ENCODE measurements at regions of chr1 and their contacts with region 1.

Region 1: GRCh38 chr1:237386362-237387143 is 344.6 kb downstream of the RYR2 start:
- DNase-seq: peak; percentile 32
- ATAC-seq: no peak; the same call in 1 of the 2 replicates
- H3K4me3 ChIP-seq: no peak overlapping the region
- H3K27ac ChIP-seq: no peak overlapping the region
- H3K4me1 ChIP-seq: no peaks in the 10 kb centered on the region
- H3K27me3 ChIP-seq: no peaks in the 10 kb centered on the region
- CTCF ChIP-seq: peak; percentile 66
- POLR2A ChIP-seq: no peak
- RAD21 ChIP-seq: peak; percentile 63

Region 2: DNA sequence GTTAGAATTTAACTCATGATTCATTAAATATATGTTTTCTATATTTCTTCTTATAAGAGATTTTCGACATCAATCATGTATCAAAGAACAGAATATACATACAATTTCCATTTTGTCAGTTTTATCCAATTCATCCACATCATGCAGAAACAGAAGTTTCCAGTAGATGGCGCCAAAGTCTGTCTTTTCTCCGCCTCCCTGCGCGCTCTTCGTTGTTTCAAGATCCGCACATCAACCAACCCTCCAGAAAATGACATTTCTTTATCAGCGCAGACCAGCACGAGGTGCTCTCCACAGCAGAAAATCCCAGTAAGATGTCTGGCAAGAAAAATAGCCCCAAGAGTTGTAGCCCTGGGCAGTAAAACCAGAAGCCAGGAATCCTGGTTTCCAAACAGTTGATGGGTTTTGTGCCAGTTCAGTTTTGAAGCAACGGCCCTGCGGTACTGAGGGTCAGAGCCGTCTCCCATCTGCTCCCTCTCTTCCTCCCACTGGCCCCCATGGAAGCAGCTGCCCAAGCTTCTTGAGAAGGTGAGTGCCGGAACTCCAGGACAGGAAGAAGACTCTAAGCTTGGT is 1282.8 kb before region 1 on chr1:
- CTCF ChIA-PET with region 1: no interaction called
- POLR2A ChIA-PET with region 1: no interaction called
- dilution Hi-C with region 1: no loop called
- in situ Hi-C with region 1: loop called (anchors 25 kb)
- intact Hi-C with region 1: loop called (anchors 10 kb)
- DNase-seq: peak; percentile 57
- ATAC-seq: peak; percentile 79
- H3K4me3 ChIP-seq: no peak overlapping the region
- H3K27ac ChIP-seq: no peak overlapping the region
- H3K4me1 ChIP-seq: peaks cover 2% of the 10 kb centered on the region; the same call in 1 of the 2 replicates
- H3K27me3 ChIP-seq: peaks cover 7% of the 10 kb centered on the region
- CTCF ChIP-seq: peak; percentile 88
- POLR2A ChIP-seq: no peak
- RAD21 ChIP-seq: peak; percentile 91

Region 3: GRCh38 chr1:236603991-236604904 is 782.3 kb before region 1 on chr1 and contains the start of gene HEATR1:
- CTCF ChIA-PET with region 1: interaction called, 4 read pairs
- POLR2A ChIA-PET with region 1: no interaction called
- dilution Hi-C with region 1: no loop called
- in situ Hi-C with region 1: loop called (anchors 25 kb)
- intact Hi-C with region 1: loop called (anchors 1 kb)
- DNase-seq: peak; percentile 96
- ATAC-seq: peak; percentile 99
- H3K4me3 ChIP-seq: peak within 1 kb of the TSS; percentile 79
- H3K27ac ChIP-seq: peak within 1 kb of the TSS; percentile 80
- H3K4me1 ChIP-seq: no peaks in the 10 kb centered on the region
- H3K27me3 ChIP-seq: no peaks in the 10 kb centered on the region
- CTCF ChIP-seq: no peak
- POLR2A ChIP-seq: peak; percentile 53; the same call in 1 of the 2 replicates
- RAD21 ChIP-seq: no peak
- total RNA-seq, gene HEATR1: 53.8 and 61.1 TPM in 2 replicates

Region 4: GRCh38 chr1:236759252-236759859 is 627.2 kb before region 1 on chr1:
- CTCF ChIA-PET with region 1: no interaction called
- POLR2A ChIA-PET with region 1: no interaction called
- dilution Hi-C with region 1: no loop called
- in situ Hi-C with region 1: loop called (anchors 25 kb)
- intact Hi-C with region 1: loop called (anchors 1 kb)
- DNase-seq: peak; percentile 42
- ATAC-seq: peak; percentile 72
- H3K4me3 ChIP-seq: no peak overlapping the region
- H3K27ac ChIP-seq: no peak overlapping the region
- H3K4me1 ChIP-seq: no peaks in the 10 kb centered on the region
- H3K27me3 ChIP-seq: no peaks in the 10 kb centered on the region
- CTCF ChIP-seq: peak; percentile 60
- POLR2A ChIP-seq: no peak
- RAD21 ChIP-seq: peak; percentile 53

Region 5: GRCh38 chr1:236868625-236869467 is 517.7 kb before region 1 on chr1:
- CTCF ChIA-PET with region 1: no interaction called
- POLR2A ChIA-PET with region 1: no interaction called
- dilution Hi-C with region 1: no loop called
- in situ Hi-C with region 1: no loop called
- intact Hi-C with region 1: loop called (anchors 2 kb)
- DNase-seq: peak; percentile 77
- ATAC-seq: peak; percentile 95
- H3K4me3 ChIP-seq: no peak overlapping the region
- H3K27ac ChIP-seq: no peak overlapping the region
- H3K4me1 ChIP-seq: no peaks in the 10 kb centered on the region
- H3K27me3 ChIP-seq: no peaks in the 10 kb centered on the region
- CTCF ChIP-seq: peak; percentile 90
- POLR2A ChIP-seq: no peak
- RAD21 ChIP-seq: peak; percentile 76

Region 6: GRCh38 chr1:237041795-237042525 is 344.6 kb before region 1 on chr1 and contains the start of gene RYR2:
- CTCF ChIA-PET with region 1: no interaction called
- POLR2A ChIA-PET with region 1: no interaction called
- dilution Hi-C with region 1: no loop called
- in situ Hi-C with region 1: no loop called
- intact Hi-C with region 1: loop called (anchors 1 kb)
- DNase-seq: no peak
- ATAC-seq: peak; percentile 62
- H3K4me3 ChIP-seq: no peak within 1 kb of the TSS
- H3K27ac ChIP-seq: no peak within 1 kb of the TSS
- H3K4me1 ChIP-seq: no peaks in the 10 kb centered on the region
- H3K27me3 ChIP-seq: peaks cover 6% of the 10 kb centered on the region; the same call in 1 of the 2 replicates
- CTCF ChIP-seq: no peak
- POLR2A ChIP-seq: no peak
- RAD21 ChIP-seq: no peak
- total RNA-seq, gene RYR2: not detected in 2 replicates